MCF 10A (cell line): ENCODE measurements at regions of chr1 and their contacts with region 1.

Region 1: GRCh38 chr1:93221913-93222312 is 41.4 kb downstream of the CCDC18 start:
- DNase-seq: peak; percentile 47
- H3K4me3 Mint-ChIP-seq: no peak overlapping the region
- H3K27ac Mint-ChIP-seq: peak overlapping the region; percentile 63
- H3K4me1 Mint-ChIP-seq: peaks cover 12% of the 10 kb centered on the region
- H3K27me3 Mint-ChIP-seq: no peaks in the 10 kb centered on the region
- CTCF ChIP-seq: no peak

Region 2: GRCh38 chr1:93179886-93180722 is 41.8 kb before region 1 on chr1 and contains the start of gene TMED5:
- CTCF ChIA-PET with region 1: no interaction called
- POLR2A ChIA-PET with region 1: interaction called, 10 read pairs
- intact Hi-C with region 1: no loop called
- DNase-seq: peak; percentile 99
- H3K4me3 Mint-ChIP-seq: peak within 1 kb of the TSS; percentile 93
- H3K27ac Mint-ChIP-seq: peak within 1 kb of the TSS; percentile 100
- H3K4me1 Mint-ChIP-seq: peaks cover 34% of the 10 kb centered on the region
- H3K27me3 Mint-ChIP-seq: no peaks in the 10 kb centered on the region
- CTCF ChIP-seq: peak; percentile 8
- total RNA-seq, gene TMED5: 80.5 and 86.2 TPM in 2 replicates

Region 3: DNA sequence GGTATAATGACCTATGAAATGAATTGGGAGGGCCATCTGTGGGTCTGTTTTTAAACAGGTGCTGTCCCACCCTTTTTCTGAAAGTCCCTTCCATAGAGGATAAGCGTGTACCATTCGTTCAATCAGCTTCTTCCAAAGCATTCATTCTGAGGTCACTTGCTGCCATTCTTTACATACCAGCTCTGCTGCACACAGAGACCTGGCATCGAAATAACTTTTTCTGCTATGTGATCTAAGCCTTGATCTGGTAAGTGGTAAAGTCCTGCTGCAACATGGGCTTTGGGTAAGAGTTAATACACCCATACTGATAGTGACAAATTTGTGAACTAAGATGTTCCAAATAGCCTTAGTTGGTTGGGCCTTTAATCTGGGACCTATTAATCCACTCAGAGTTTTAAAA is 162.7 kb after region 1 on chr1:
- CTCF ChIA-PET with region 1: no interaction called
- POLR2A ChIA-PET with region 1: no interaction called
- intact Hi-C with region 1: no loop called
- DNase-seq: no peak
- H3K4me3 Mint-ChIP-seq: no peak overlapping the region
- H3K27ac Mint-ChIP-seq: no peak overlapping the region
- H3K4me1 Mint-ChIP-seq: no peaks in the 10 kb centered on the region
- H3K27me3 Mint-ChIP-seq: no peaks in the 10 kb centered on the region
- CTCF ChIP-seq: no peak